ENCODE measurements at regions of chr7 and their contacts with region 1.

Region 1: GRCh38 chr7:144835652-144836544 is at the start of gene TPK1:
- DNase-seq: peak; percentile 95
- ATAC-seq: peak; percentile 89
- H3K4me3 ChIP-seq: peak within 1 kb of the TSS; percentile 83 to 98 (median 91)
- H3K4me3 Mint-ChIP-seq: peak within 1 kb of the TSS; percentile 93
- H3K27ac ChIP-seq: peak within 1 kb of the TSS; percentile 87
- H3K27ac Mint-ChIP-seq: peak within 1 kb of the TSS; percentile 99
- H3K4me1 ChIP-seq: peaks cover 18% of the 10 kb centered on the region in 2 donors
- H3K4me1 Mint-ChIP-seq: peaks cover 23% of the 10 kb centered on the region
- H3K27me3 ChIP-seq: no peaks in the 10 kb centered on the region
- H3K27me3 Mint-ChIP-seq: no peaks in the 10 kb centered on the region
- CTCF ChIP-seq: no peak
- total RNA-seq, gene TPK1: 26.4 and 29.4 TPM in 2 replicates

Region 2: GRCh38 chr7:144738708-144739314 is 97.1 kb before region 1 on chr7:
- CTCF ChIA-PET with region 1: interaction called, 27 read pairs
- POLR2A ChIA-PET with region 1: interaction called, 8 read pairs
- intact Hi-C with region 1: loop called (anchors 2 kb)
- DNase-seq: peak; percentile 56
- ATAC-seq: peak; percentile 58
- H3K4me3 ChIP-seq: no peak overlapping the region
- H3K4me3 Mint-ChIP-seq: no peak overlapping the region
- H3K27ac ChIP-seq: no peak overlapping the region
- H3K27ac Mint-ChIP-seq: no peak overlapping the region
- H3K4me1 ChIP-seq: peaks cover 0 to 10% of the 10 kb centered on the region in 2 donors
- H3K4me1 Mint-ChIP-seq: peaks cover 7% of the 10 kb centered on the region
- H3K27me3 ChIP-seq: no peaks in the 10 kb centered on the region
- H3K27me3 Mint-ChIP-seq: no peaks in the 10 kb centered on the region
- CTCF ChIP-seq: peak; percentile 91

Region 3: GRCh38 chr7:144786522-144786921 is 49.4 kb before region 1 on chr7:
- CTCF ChIA-PET with region 1: interaction called, 10 read pairs
- POLR2A ChIA-PET with region 1: no interaction called
- intact Hi-C with region 1: no loop called
- DNase-seq: peak; percentile 32
- ATAC-seq: no peak
- H3K4me3 ChIP-seq: no peak overlapping the region
- H3K4me3 Mint-ChIP-seq: no peak overlapping the region
- H3K27ac ChIP-seq: no peak overlapping the region
- H3K27ac Mint-ChIP-seq: no peak overlapping the region
- H3K4me1 ChIP-seq: peaks cover 0 to 2% of the 10 kb centered on the region in 2 donors
- H3K4me1 Mint-ChIP-seq: peaks cover 6% of the 10 kb centered on the region
- H3K27me3 ChIP-seq: no peaks in the 10 kb centered on the region
- H3K27me3 Mint-ChIP-seq: no peaks in the 10 kb centered on the region
- CTCF ChIP-seq: peak; percentile 43

Region 4: DNA sequence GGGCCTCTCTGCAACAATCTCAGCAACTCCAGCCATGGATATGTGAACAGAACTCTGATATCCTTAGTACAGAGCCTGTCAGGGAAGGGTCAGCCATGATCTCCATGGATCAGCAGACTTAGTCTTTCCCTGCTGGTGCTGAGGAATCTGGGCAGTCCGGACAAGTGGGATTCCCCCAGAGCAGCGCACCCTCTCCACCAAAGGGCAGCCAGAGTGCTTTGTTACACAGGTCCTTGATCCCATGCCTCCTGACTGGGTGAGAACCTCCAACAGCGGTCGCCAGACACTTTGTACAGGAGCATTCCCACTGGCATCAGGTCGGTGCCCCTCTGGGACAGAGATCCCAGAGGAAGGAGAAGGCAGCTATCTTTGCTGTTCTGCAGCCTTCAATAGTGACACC is 39.0 kb before region 1 on chr7:
- CTCF ChIA-PET with region 1: interaction called, 24 read pairs
- POLR2A ChIA-PET with region 1: interaction called, 7 read pairs
- intact Hi-C with region 1: loop called (anchors 5 kb)
- DNase-seq: no peak
- ATAC-seq: no peak
- H3K4me3 ChIP-seq: no peak overlapping the region
- H3K4me3 Mint-ChIP-seq: no peak overlapping the region
- H3K27ac ChIP-seq: no peak overlapping the region
- H3K27ac Mint-ChIP-seq: no peak overlapping the region
- H3K4me1 ChIP-seq: peaks cover 24 to 28% of the 10 kb centered on the region in 2 donors
- H3K4me1 Mint-ChIP-seq: peaks cover 37% of the 10 kb centered on the region
- H3K27me3 ChIP-seq: no peaks in the 10 kb centered on the region
- H3K27me3 Mint-ChIP-seq: no peaks in the 10 kb centered on the region
- CTCF ChIP-seq: no peak

Region 5: DNA sequence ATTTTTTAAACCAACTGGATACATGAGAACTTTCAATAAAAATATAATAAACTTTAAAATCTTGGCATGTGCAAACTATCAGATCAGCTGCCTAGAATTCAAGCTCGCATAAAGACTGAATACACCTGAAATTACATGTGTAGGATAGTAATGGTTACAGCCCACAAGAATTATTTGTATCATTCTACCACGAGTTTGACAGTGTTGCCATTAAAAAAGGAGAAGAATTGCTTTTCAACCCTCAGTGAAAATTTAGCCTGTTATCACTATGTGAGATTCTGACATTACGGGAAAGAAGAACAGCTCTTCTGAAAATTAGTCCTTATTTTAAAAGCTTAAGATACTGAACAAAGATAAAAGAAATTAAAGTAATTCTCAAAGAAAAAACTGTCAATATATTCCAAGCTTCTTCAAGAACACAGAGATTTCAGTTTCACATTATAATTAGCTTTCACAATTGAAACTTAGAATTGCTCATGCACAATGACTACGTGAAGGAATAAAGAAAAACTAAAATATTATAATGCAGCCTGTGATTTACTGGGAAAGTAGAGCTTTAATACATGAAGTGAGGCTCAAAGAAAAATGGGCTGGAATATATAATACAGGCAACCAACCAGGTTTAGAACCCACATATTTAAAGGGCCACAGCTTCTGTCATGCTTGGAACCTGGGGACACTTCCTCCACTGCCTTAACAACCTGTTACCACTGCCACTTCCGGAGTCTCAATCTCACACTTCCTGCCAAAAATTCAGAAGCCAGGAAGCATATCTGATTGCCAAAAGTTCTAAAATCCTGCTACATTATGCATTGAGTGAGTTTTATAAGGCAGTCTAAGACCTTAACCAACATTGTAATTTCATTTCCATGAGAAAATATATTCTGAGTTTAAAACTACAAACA is 23.3 kb before region 1 on chr7:
- CTCF ChIA-PET with region 1: interaction called, 49 read pairs
- POLR2A ChIA-PET with region 1: interaction called, 55 read pairs
- intact Hi-C with region 1: loop called (anchors 1 kb)
- DNase-seq: peak; percentile 64
- ATAC-seq: peak; percentile 87
- H3K4me3 ChIP-seq: peak overlapping the region in 4 of 5 experiments; percentile 25 to 41 (median 30)
- H3K4me3 Mint-ChIP-seq: peak overlapping the region; percentile 79
- H3K27ac ChIP-seq: peak overlapping the region; percentile 46 to 82
- H3K27ac Mint-ChIP-seq: peak overlapping the region; percentile 90
- H3K4me1 ChIP-seq: peaks cover 24 to 30% of the 10 kb centered on the region in 2 donors
- H3K4me1 Mint-ChIP-seq: peaks cover 44% of the 10 kb centered on the region
- H3K27me3 ChIP-seq: no peaks in the 10 kb centered on the region
- H3K27me3 Mint-ChIP-seq: no peaks in the 10 kb centered on the region
- CTCF ChIP-seq: no peak

Region 6: GRCh38 chr7:144818511-144818910 is 17.4 kb before region 1 on chr7:
- CTCF ChIA-PET with region 1: interaction called, 49 read pairs
- POLR2A ChIA-PET with region 1: interaction called, 55 read pairs
- intact Hi-C with region 1: loop called (anchors 1 kb)
- DNase-seq: peak; percentile 79
- ATAC-seq: peak; percentile 95
- H3K4me3 ChIP-seq: no peak overlapping the region
- H3K4me3 Mint-ChIP-seq: peak overlapping the region; percentile 59
- H3K27ac ChIP-seq: peak overlapping the region; percentile 59 to 83
- H3K27ac Mint-ChIP-seq: peak overlapping the region; percentile 84
- H3K4me1 ChIP-seq: peaks cover 37 to 55% of the 10 kb centered on the region in 2 donors
- H3K4me1 Mint-ChIP-seq: peaks cover 67% of the 10 kb centered on the region
- H3K27me3 ChIP-seq: no peaks in the 10 kb centered on the region
- H3K27me3 Mint-ChIP-seq: no peaks in the 10 kb centered on the region
- CTCF ChIP-seq: no peak

Region 7: GRCh38 chr7:144824360-144824759 is 11.5 kb before region 1 on chr7:
- CTCF ChIA-PET with region 1: interaction called, 49 read pairs
- POLR2A ChIA-PET with region 1: interaction called, 55 read pairs
- intact Hi-C with region 1: loop called (anchors 1 kb)
- DNase-seq: no peak
- ATAC-seq: no peak
- H3K4me3 ChIP-seq: no peak overlapping the region
- H3K4me3 Mint-ChIP-seq: no peak overlapping the region
- H3K27ac ChIP-seq: peak overlapping the region in 1 of 2 donors; percentile 74
- H3K27ac Mint-ChIP-seq: no peak overlapping the region
- H3K4me1 ChIP-seq: peaks cover 34 to 51% of the 10 kb centered on the region in 2 donors
- H3K4me1 Mint-ChIP-seq: peaks cover 59% of the 10 kb centered on the region
- H3K27me3 ChIP-seq: no peaks in the 10 kb centered on the region
- H3K27me3 Mint-ChIP-seq: no peaks in the 10 kb centered on the region
- CTCF ChIP-seq: no peak

Measured in B cell (primary cell).